MCF 10A (cell line): ENCODE measurements at regions of chr12 and their contacts with region 1.

Region 1: GRCh38 chr12:3073438-3074250 is 3.5 kb upstream of the TSPAN9 start:
- DNase-seq: peak; percentile 84
- H3K4me3 Mint-ChIP-seq: no peak overlapping the region
- H3K27ac Mint-ChIP-seq: no peak overlapping the region
- H3K4me1 Mint-ChIP-seq: no peaks in the 10 kb centered on the region
- H3K27me3 Mint-ChIP-seq: peaks cover under 1% of the 10 kb centered on the region
- CTCF ChIP-seq: peak; percentile 95

Region 2: DNA sequence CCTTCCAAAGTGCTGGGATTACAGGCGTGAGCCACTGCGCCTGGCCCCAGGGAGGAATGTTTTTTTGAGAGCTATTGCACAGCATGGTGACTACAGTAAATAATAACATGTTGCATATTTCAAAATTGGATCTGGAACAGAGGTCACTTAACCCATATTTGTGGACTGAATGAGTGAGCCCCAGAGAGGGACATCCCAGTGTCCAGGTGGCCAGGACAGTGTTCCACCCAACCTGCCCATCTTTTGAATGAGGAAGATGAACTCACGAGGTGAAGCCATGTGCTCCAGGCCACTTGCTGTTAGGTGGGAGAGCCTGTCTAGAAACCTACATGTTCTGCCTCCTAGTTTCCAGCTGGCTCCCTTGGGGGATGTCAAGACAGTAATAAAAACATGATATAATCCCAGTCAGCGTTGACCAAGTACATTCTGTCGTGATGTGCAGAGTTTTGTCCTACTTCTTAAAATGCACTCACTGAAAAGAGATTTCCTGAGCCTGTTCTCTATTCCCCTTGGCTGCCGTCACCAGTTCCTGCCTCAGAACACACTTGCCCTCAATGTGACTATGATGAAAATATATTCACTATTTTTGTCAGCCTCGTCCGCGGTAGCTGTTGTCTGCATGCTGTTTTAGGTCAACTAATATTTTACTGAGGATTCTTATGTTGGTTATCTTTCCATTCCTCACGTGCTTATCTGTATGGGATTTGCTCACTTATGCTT is 29.2 kb after region 1 on chr12:
- CTCF ChIA-PET with region 1: interaction called, 16 read pairs
- POLR2A ChIA-PET with region 1: interaction called, 3 read pairs
- intact Hi-C with region 1: no loop called
- DNase-seq: no peak
- H3K4me3 Mint-ChIP-seq: no peak overlapping the region
- H3K27ac Mint-ChIP-seq: no peak overlapping the region
- H3K4me1 Mint-ChIP-seq: peaks cover 24% of the 10 kb centered on the region
- H3K27me3 Mint-ChIP-seq: no peaks in the 10 kb centered on the region
- CTCF ChIP-seq: no peak

Region 3: GRCh38 chr12:3122835-3123678 is 49.4 kb after region 1 on chr12:
- CTCF ChIA-PET with region 1: interaction called, 26 read pairs
- POLR2A ChIA-PET with region 1: interaction called, 3 read pairs
- intact Hi-C with region 1: loop called (anchors 1 kb)
- DNase-seq: peak; percentile 89
- H3K4me3 Mint-ChIP-seq: no peak overlapping the region
- H3K27ac Mint-ChIP-seq: peak overlapping the region; percentile 33
- H3K4me1 Mint-ChIP-seq: peaks cover 33% of the 10 kb centered on the region
- H3K27me3 Mint-ChIP-seq: no peaks in the 10 kb centered on the region
- CTCF ChIP-seq: no peak

Region 4: DNA sequence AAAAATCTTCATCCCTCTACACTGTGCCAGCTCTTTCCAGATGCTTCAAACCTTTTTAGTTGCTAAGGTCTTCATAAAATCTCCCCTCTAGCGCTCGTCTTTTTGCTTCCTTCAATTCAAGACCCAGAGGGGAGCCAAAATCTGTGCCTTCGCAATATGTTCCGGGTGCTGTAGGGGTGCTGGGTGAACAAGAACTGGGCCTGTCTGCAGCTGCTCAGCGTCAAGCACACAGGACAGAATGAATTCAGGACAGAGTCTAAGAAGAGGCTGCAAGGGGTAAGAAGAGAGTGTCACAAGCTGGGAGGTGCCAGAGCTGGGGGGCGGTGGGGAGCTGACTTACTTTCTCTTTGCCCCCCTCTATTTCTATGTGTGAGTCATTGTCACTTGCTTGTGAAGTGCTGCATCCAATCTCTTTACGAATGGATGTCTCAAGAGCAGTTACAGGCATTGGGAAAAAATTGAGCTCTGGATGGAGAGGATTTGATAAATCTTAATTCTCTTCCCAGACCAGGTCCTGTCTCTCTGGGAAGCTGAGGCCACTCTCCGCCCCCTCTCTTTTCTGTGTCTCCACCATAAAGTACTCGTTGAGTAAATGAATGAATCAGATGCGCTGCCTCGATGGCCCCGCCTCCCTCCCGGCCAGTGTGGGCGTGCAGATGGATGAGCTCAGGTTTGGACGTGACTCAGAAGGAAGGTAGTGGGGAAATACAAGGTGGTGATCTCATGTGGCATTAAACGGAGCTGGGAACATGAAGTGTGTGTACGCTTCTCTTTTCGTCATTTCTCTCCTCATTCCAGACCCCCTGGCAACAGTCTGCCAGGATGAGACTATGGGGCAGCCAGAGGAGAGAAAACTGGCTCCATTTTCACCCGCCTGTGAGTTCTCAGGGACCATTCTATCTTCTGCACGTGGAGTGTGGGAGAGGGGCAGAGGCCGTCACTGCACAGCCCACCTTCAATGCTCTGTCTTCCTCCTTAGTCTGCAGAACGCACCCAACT is 94.9 kb after region 1 on chr12:
- CTCF ChIA-PET with region 1: interaction called, 11 read pairs
- POLR2A ChIA-PET with region 1: interaction called, 6 read pairs
- intact Hi-C with region 1: no loop called
- DNase-seq: peak; percentile 97
- H3K4me3 Mint-ChIP-seq: peak overlapping the region; percentile 20
- H3K27ac Mint-ChIP-seq: peak overlapping the region; percentile 66
- H3K4me1 Mint-ChIP-seq: peaks cover 46% of the 10 kb centered on the region
- H3K27me3 Mint-ChIP-seq: no peaks in the 10 kb centered on the region
- CTCF ChIP-seq: no peak

Region 5: DNA sequence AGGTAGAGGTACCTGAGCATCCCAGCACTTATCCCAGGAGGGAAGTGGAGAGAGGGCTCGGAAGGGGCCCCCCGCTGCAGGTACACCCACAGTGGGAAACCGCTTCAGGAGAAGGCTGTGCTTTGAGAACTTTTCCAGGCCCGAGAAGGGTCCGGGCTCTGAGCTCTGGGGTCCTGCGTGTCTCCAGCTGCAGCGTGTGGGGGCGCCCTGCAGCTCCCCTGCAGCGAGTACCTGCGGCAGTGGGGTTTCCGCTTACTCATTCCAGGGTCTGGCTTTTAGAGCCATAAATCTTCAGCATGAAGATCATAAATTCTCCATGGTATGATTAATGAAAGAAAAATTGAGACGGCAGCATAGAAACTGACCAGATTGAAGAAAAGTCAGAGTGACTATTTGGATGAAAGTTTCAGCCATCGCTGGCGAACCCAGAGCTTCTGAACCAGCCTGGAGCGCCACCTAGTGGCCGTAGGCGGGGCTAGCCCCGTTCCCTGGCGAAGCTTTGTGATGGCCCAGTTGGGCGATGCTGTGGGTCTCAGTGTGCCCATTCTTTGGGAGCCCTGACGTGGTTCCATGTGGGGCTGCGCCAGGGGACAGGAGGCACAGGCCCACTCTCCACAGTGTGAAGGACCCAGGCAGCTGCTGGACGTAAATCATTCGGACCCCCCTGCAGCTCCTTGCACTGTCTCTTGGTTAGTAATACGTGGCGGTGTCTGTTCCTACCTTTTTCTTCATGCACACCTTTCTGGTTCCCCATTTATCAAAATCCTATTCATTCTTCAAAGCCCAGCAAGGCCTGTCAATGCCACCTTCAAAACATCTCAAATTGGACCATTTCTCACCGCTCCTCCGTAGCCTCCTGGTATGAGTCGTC is 201.8 kb after region 1 on chr12:
- CTCF ChIA-PET with region 1: interaction called, 86 read pairs
- POLR2A ChIA-PET with region 1: interaction called, 4 read pairs
- intact Hi-C with region 1: loop called (anchors 1 kb)
- DNase-seq: peak; percentile 68
- H3K4me3 Mint-ChIP-seq: no peak overlapping the region
- H3K27ac Mint-ChIP-seq: no peak overlapping the region
- H3K4me1 Mint-ChIP-seq: peaks cover 17% of the 10 kb centered on the region
- H3K27me3 Mint-ChIP-seq: no peaks in the 10 kb centered on the region
- CTCF ChIP-seq: peak; percentile 95

Region 6: DNA sequence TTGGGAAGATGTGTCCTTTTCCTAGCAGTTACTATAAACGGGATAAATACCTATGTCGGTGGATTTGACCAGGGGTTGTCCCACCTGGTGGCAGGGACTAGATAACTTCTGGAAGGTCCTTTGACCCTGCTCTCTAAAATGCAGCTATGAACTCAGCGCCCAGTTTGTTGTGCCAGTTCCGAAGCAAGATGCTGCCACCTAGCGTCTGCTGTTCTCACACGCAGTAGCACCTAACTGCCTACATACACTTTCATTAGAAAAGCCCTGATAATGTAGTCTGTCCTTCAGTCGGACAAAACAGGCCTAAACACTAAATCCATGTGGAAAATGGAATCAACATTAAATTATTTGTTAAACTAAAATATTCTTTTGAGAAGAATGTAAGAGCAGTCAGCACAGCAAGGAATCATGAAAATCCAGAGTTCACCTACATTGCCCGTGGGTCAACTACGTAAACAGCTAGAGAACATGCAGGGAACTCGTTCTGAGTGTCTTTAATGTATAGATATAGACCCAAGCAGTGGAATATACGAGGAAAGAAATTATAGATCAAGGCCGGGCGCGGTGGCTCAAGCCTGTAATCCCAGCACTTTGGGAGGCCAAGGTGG is 730.3 kb after region 1 on chr12:
- CTCF ChIA-PET with region 1: interaction called, 3 read pairs
- POLR2A ChIA-PET with region 1: no interaction called
- intact Hi-C with region 1: loop called (anchors 10 kb)
- DNase-seq: peak; percentile 68
- H3K4me3 Mint-ChIP-seq: no peak overlapping the region
- H3K27ac Mint-ChIP-seq: no peak overlapping the region
- H3K4me1 Mint-ChIP-seq: no peaks in the 10 kb centered on the region
- H3K27me3 Mint-ChIP-seq: no peaks in the 10 kb centered on the region
- CTCF ChIP-seq: peak; percentile 71